CD8-positive, alpha-beta memory T cell (primary cell): ENCODE measurements at regions of chr16 and their contacts with region 1.

Region 1: DNA sequence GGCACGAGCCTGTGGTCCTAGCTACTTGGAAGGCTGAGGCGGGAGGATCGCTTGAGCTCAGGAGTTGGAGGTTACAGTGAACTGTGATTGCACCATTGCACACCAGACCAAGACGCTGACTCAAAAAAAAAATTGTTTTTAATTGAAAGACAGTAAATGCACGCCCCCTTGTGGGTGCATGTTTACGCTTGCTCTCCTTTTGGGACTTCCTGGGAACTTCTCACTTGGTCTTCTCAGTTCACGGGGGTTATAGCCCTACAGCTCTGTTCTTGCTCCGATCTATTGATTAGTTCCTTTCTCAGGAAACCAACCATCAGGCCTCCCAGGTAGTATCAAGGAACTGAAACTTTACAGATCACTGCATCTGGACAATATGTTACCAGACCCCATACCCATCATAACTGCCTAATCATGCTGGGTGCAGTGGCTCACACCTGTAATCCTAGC is 14.2 kb upstream of the RIPOR1 start:
- DNase-seq: peak; percentile 72 to 85 (median 73)
- H3K4me3 ChIP-seq: no peak overlapping the region
- H3K4me3 Mint-ChIP-seq: peak overlapping the region in 1 of 7 donors; percentile 32
- H3K27ac ChIP-seq: no peak overlapping the region
- H3K27ac Mint-ChIP-seq: peak overlapping the region in 4 of 8 donors; percentile 33 to 74 (median 63)
- H3K4me1 ChIP-seq: peaks cover 11% of the 10 kb centered on the region
- H3K4me1 Mint-ChIP-seq: peaks cover 9 to 17% (median 14%) of the 10 kb centered on the region in 3 donors
- H3K27me3 ChIP-seq: no peaks in the 10 kb centered on the region
- H3K27me3 Mint-ChIP-seq: peaks cover 0 to under 1% of the 10 kb centered on the region in 2 donors

Region 2: GRCh38 chr16:67480833-67481560 is 33.4 kb before region 1 on chr16 and contains the start of gene ATP6V0D1:
- CTCF ChIA-PET with region 1: interaction called, 94 read pairs
- POLR2A ChIA-PET with region 1: interaction called, 6 read pairs
- DNase-seq: peak; percentile 98 to 99 (median 99)
- H3K4me3 ChIP-seq: peak within 1 kb of the TSS; percentile 96
- H3K4me3 Mint-ChIP-seq: peak within 1 kb of the TSS; percentile 96 to 100 (median 100)
- H3K27ac ChIP-seq: peak within 1 kb of the TSS; percentile 98
- H3K27ac Mint-ChIP-seq: peak within 1 kb of the TSS; percentile 96 to 100 (median 99)
- H3K4me1 ChIP-seq: peaks cover 28% of the 10 kb centered on the region
- H3K4me1 Mint-ChIP-seq: peaks cover 45 to 72% (median 47%) of the 10 kb centered on the region in 3 donors
- H3K27me3 ChIP-seq: no peaks in the 10 kb centered on the region
- H3K27me3 Mint-ChIP-seq: peaks cover 0 to 2% of the 10 kb centered on the region in 2 donors
- total RNA-seq, gene ATP6V0D1: 49.3 to 57.6 TPM

Region 3: DNA sequence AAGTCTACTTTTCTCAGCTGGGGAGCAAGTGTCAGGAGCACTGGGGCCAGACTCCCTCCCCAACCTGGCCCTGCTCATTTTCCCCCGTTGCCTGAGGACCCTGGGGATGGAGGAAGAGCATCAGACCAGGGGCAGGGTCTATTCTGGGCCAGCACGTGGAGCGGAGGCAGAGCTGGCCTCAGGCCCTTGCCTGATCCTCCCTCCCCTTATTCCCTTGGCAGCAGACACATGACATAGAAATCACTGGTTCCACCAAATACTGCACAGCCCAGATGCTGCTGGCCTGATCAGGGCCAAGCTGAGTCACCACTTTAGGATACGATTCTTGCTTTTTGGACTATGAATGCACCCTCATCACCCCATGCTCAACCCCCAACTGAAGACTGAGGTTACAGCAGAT is 15.3 kb before region 1 on chr16:
- CTCF ChIA-PET with region 1: interaction called, 168 read pairs
- POLR2A ChIA-PET with region 1: interaction called, 4 read pairs
- DNase-seq: no peak
- H3K4me3 ChIP-seq: no peak overlapping the region
- H3K4me3 Mint-ChIP-seq: no peak overlapping the region
- H3K27ac ChIP-seq: no peak overlapping the region
- H3K27ac Mint-ChIP-seq: peak overlapping the region in 6 of 8 donors; percentile 50 to 92 (median 72)
- H3K4me1 ChIP-seq: peaks cover 18% of the 10 kb centered on the region
- H3K4me1 Mint-ChIP-seq: peaks cover 12 to 17% (median 15%) of the 10 kb centered on the region in 3 donors
- H3K27me3 ChIP-seq: no peaks in the 10 kb centered on the region
- H3K27me3 Mint-ChIP-seq: no peaks in the 10 kb centered on the region

Region 4: GRCh38 chr16:67504041-67505021 is 10.1 kb before region 1 on chr16:
- CTCF ChIA-PET with region 1: interaction called, 87 read pairs
- POLR2A ChIA-PET with region 1: no interaction called
- DNase-seq: peak in 4 of 5 donors; percentile 29 to 56 (median 44)
- H3K4me3 ChIP-seq: peak overlapping the region; percentile 28
- H3K4me3 Mint-ChIP-seq: peak overlapping the region in 6 of 7 donors; percentile 56 to 77 (median 68)
- H3K27ac ChIP-seq: peak overlapping the region; percentile 21
- H3K27ac Mint-ChIP-seq: peak overlapping the region; percentile 83 to 98 (median 94)
- H3K4me1 ChIP-seq: peaks cover 59% of the 10 kb centered on the region
- H3K4me1 Mint-ChIP-seq: peaks cover 47 to 53% (median 49%) of the 10 kb centered on the region in 3 donors
- H3K27me3 ChIP-seq: no peaks in the 10 kb centered on the region
- H3K27me3 Mint-ChIP-seq: no peaks in the 10 kb centered on the region